ENCODE measurements at regions of chr4 and their contacts with region 1.

Region 1: DNA sequence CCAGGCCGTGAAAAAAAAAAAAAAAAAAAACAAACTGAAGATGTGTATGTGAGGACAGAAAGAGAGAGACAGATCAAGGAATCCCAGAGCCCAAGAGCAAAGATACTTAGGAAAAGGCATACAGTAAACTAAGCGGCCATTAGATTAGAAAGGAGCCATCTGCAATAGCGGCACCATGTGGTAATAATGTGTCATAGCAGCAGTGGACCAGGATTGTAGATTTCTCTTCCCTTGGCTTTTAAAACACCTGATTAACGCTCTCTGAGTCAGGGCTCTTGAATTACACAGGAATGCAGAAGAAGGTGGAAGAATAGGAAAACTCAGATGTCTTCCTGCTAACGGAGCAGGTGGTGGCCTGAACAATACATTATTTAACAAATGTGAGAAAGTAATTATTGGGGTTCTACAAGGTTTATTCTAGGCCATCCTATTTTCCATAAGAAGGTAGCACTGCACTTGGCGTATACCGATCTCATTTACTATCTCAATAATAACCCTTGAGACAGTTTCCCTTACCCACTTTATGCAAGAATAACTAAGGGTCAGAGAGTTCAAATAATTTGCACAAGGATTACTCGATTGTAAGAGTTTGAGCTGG is 182.7 kb downstream of the KCNIP4 start:
- DNase-seq: peak; percentile 29
- ATAC-seq: peak; percentile 93
- H3K4me3 ChIP-seq: no peak overlapping the region
- H3K27ac ChIP-seq: no peak overlapping the region
- H3K4me1 ChIP-seq: no peaks in the 10 kb centered on the region
- H3K27me3 ChIP-seq: no peaks in the 10 kb centered on the region
- CTCF ChIP-seq: peak; percentile 78
- POLR2A ChIP-seq: no peak
- RAD21 ChIP-seq: peak; percentile 43

Region 2: DNA sequence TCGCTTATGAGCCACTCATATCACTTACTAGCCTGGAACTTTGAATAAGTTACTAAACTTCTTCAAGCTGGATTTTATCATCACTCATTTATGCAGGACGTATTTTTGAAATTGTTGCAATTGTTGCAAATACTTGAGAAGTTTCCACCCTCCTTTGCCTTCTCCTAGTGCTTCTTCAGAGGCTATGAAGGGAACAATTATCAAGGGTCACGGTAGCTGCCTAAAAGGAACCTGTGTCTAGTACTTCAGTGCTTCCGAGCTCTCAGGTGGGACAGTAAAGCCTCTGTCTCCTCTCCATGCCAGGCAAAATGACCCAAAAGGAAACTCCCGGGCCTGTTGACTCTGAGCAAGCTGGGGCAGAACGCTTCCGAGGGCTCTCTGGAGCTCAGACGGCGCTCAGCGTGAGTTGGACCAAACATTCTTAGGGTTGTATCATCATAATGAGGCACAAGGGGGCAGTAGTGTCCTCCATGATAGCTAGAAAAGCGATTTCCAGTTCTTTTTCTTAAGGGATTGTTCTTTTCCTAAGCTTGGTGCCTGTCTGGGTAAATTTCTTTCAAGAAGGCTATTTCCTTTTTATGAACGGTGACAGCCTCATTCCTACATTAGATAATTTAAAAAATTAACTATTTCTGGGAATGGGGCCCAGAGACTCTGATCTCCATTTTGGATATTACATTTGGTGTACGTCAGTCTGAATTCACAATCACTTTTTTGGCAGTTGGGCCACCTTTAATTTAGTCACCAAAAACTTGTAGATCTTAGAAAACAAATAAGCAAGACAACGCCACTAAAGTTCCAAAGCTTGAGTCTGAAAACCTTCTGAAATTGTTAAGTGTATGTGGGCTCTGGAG is 992.5 kb before region 1 on chr4:
- CTCF ChIA-PET with region 1: interaction called, 13 read pairs
- POLR2A ChIA-PET with region 1: no interaction called
- dilution Hi-C with region 1: no loop called
- in situ Hi-C with region 1: loop called (anchors 10 kb)
- intact Hi-C with region 1: loop called (anchors 1 kb)
- DNase-seq: peak; percentile 54
- ATAC-seq: peak; percentile 96
- H3K4me3 ChIP-seq: no peak overlapping the region
- H3K27ac ChIP-seq: no peak overlapping the region
- H3K4me1 ChIP-seq: no peaks in the 10 kb centered on the region
- H3K27me3 ChIP-seq: no peaks in the 10 kb centered on the region
- CTCF ChIP-seq: peak; percentile 72
- POLR2A ChIP-seq: no peak
- RAD21 ChIP-seq: peak; percentile 66

Region 3: DNA sequence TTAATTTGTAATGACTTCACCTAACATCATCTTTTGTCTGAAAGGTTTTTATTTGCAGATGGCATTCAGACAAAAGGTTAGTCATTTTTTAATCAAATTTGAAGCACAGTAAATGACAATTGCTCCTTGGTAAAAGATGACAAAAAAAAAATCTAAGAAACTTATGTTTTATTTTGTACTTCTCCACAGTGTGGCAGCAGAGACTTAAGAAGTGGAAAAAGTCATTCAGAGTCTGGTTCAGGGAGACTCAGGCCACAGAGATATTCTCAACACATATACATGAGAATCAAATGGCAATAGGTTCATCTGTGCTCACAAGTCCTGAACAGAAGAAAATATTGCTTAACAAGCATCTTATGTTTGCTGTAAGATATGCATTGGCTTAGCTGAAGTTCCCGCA is 253.6 kb before region 1 on chr4:
- CTCF ChIA-PET with region 1: no interaction called
- POLR2A ChIA-PET with region 1: no interaction called
- dilution Hi-C with region 1: no loop called
- in situ Hi-C with region 1: loop called (anchors 25 kb)
- intact Hi-C with region 1: loop called (anchors 5 kb)
- DNase-seq: peak; percentile 4
- ATAC-seq: no peak
- H3K4me3 ChIP-seq: no peak overlapping the region
- H3K27ac ChIP-seq: no peak overlapping the region
- H3K4me1 ChIP-seq: no peaks in the 10 kb centered on the region
- H3K27me3 ChIP-seq: no peaks in the 10 kb centered on the region
- CTCF ChIP-seq: peak; percentile 30; the same call in 1 of the 2 replicates
- POLR2A ChIP-seq: no peak
- RAD21 ChIP-seq: peak; percentile 37; the same call in 1 of the 2 replicates

Region 4: DNA sequence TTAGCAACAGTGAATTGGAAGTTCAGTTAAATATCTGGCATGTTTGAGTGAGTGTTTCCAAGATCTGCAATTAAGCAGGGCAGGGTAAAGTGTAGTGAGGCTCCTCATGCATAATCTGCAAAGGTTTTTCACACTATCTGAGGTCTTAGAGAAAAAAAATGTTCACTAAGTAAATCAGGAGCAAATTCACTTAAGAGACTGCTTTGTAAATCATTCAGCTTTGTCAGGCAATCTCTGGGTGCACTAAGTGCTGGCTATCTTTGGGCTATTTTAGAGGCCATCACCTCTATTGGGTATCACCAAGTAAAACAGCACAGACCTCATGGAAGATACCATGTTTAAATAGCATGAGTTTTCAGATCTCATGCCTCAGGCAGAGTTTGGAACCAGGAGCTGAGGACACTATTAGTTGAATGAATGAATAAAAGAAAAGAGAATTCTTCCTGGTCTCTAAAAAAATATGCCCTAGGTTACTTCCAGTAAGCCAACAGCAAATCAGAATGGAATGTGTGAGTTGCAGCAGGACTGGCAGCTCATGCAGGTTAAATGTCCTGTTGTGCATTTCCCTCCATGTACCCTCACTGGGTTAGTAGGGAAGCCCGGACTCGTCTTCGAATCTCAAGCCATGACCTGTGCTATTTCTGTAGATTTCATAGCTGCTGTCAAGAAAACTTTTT is 12.7 kb before region 1 on chr4:
- CTCF ChIA-PET with region 1: interaction called, 13 read pairs
- POLR2A ChIA-PET with region 1: no interaction called
- dilution Hi-C with region 1: no loop called
- in situ Hi-C with region 1: no loop called
- intact Hi-C with region 1: no loop called
- DNase-seq: no peak
- ATAC-seq: no peak
- H3K4me3 ChIP-seq: no peak overlapping the region
- H3K27ac ChIP-seq: no peak overlapping the region
- H3K4me1 ChIP-seq: no peaks in the 10 kb centered on the region
- H3K27me3 ChIP-seq: no peaks in the 10 kb centered on the region
- CTCF ChIP-seq: no peak
- POLR2A ChIP-seq: no peak
- RAD21 ChIP-seq: no peak

Region 5: DNA sequence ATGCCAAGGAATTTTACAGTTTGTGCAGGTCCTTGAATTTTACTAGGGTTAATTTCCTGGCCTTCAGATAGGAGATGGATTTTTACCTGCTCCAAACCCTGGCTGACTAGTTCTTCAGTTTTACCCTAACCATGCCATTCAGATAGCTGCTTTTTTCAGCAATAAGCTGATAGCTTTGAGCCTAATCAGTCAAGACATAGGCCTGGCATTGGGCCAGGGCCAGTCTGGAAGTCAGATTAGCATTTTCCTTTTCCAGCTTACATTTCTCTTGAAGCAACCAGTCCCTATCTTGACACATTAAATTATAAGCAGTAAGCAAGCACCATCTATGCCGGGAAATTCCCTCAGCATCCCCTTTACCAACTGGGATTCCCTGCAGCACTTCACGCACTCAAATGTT is 572.9 kb after region 1 on chr4:
- CTCF ChIA-PET with region 1: no interaction called
- POLR2A ChIA-PET with region 1: no interaction called
- dilution Hi-C with region 1: no loop called
- in situ Hi-C with region 1: no loop called
- intact Hi-C with region 1: no loop called
- DNase-seq: no peak
- ATAC-seq: no peak
- H3K4me3 ChIP-seq: no peak overlapping the region
- H3K27ac ChIP-seq: no peak overlapping the region
- H3K4me1 ChIP-seq: no peaks in the 10 kb centered on the region
- H3K27me3 ChIP-seq: no peaks in the 10 kb centered on the region
- CTCF ChIP-seq: no peak
- POLR2A ChIP-seq: no peak
- RAD21 ChIP-seq: no peak